ENCODE measurements at regions of chr12 and their contacts with region 1.

Region 1: DNA sequence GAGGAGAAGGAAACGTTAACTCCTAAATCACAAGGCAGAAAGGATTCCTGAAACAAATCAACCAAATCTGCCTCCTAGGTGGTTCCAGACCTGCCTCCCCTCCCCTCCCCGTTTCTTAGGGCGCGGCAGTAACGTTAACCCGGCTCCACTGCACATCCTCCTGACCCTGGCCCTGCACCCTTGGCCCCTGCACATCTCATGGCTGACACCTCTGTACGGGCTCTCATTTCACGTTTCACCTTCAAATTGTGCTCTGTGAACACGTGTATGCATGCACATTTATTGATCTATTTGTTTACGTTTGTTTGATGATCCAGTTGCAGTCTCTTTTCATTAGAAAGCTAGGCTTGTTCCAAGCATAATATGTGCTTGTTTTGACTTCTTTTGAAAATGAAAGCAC is 358.1 kb downstream of the ADGRD1 start:
- DNase-seq: peak in 1 of 2 donors; percentile 45
- ATAC-seq: no peak
- H3K4me3 ChIP-seq: no peak overlapping the region
- H3K27ac ChIP-seq: no peak overlapping the region
- H3K4me1 ChIP-seq: no peaks in the 10 kb centered on the region
- H3K27me3 ChIP-seq: no peaks in the 10 kb centered on the region

Region 2: GRCh38 chr12:131380220-131380964 is 68.6 kb after region 1 on chr12:
- intact Hi-C with region 1: no loop called
- DNase-seq: no peak
- ATAC-seq: no peak
- H3K4me3 ChIP-seq: no peak overlapping the region
- H3K27ac ChIP-seq: no peak overlapping the region
- H3K4me1 ChIP-seq: no peaks in the 10 kb centered on the region
- H3K27me3 ChIP-seq: no peaks in the 10 kb centered on the region

Region 3: GRCh38 chr12:131642101-131642540 is 330.4 kb after region 1 on chr12:
- intact Hi-C with region 1: loop called (anchors 5 kb)
- DNase-seq: no peak
- ATAC-seq: no peak
- H3K4me3 ChIP-seq: no peak overlapping the region
- H3K27ac ChIP-seq: no peak overlapping the region
- H3K4me1 ChIP-seq: no peaks in the 10 kb centered on the region
- H3K27me3 ChIP-seq: no peaks in the 10 kb centered on the region

Measured in aorta (tissue), 5 donors.